Mammary epithelial cell (primary cell): ENCODE measurements at regions of chr7 and their contacts with region 1.

Region 1: DNA sequence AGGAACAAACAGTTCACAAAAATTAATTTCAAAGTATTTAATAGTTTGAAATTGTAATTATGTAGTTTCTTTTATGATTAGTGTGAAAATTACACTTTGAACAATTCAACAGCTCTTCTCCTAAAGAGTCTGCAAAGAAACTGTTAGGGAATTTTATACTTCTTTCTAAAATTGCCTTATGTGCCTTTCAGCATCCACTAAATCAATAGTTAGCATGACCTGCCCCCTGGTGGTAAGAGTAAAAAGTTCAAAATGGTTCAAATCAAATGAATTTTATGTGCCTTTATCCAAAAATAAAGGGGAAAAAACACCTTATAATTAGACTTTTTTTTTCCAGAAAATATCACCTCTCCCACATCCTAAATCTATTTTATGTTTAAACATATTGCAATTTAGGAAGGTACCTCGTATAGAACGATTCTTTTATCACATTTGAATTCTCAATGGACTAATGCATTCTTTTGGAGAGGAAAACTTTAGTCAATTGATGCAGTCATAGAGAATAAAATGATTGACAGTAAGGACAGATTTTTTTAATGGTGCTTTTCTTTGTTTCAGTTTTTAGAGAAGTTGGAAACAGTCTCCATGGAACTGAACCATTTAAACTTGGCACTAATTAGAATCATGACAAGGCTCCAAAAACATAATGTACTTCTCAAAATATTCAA is 163.7 kb downstream of the SEMA3D start:
- DNase-seq: peak; percentile 24
- H3K4me3 ChIP-seq: no peak overlapping the region
- H3K27ac ChIP-seq: no peak overlapping the region
- H3K4me1 ChIP-seq: no peaks in the 10 kb centered on the region
- H3K27me3 ChIP-seq: no peaks in the 10 kb centered on the region
- CTCF ChIP-seq: peak; percentile 49 to 58

Region 2: DNA sequence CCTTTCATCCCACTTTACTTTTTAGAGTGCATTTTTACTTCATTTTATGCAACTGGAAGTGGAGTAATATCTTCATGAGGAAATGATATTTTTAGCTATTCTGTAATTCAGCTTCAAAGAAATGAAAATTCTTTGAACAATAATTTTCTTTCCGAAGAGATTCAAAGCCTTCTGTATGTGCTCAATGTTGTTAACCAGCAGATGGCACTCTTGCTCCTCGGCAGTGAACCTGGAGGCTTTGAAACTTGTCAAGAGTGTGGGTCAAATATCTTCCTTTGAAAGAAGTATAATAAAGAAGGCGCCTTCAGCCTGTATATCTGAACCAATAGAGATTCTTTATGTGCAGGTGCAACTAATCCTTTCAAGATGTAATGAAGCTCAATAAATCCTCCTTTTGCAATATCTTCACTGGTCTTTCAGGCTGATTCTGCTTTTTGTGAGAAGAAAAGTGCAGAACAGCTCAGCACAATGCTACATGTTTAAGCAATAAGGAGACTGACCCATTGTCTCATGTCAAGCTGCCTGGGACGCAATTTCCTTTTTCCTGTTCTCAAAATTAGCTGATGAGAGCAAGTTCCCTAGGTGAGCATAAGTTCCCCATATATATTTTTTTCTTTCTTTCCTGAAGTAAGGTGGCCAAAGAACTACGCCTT is 1087.0 kb before region 1 on chr7:
- CTCF ChIA-PET with region 1: no interaction called
- dilution Hi-C with region 1: no loop called
- in situ Hi-C with region 1: loop called in 1 of 2 experiments (anchors 10 kb)
- intact Hi-C with region 1: loop called (anchors 1 kb)
- DNase-seq: peak; percentile 57
- H3K4me3 ChIP-seq: no peak overlapping the region
- H3K27ac ChIP-seq: no peak overlapping the region
- H3K4me1 ChIP-seq: no peaks in the 10 kb centered on the region
- H3K27me3 ChIP-seq: no peaks in the 10 kb centered on the region
- CTCF ChIP-seq: peak; percentile 90 to 96

Region 3: DNA sequence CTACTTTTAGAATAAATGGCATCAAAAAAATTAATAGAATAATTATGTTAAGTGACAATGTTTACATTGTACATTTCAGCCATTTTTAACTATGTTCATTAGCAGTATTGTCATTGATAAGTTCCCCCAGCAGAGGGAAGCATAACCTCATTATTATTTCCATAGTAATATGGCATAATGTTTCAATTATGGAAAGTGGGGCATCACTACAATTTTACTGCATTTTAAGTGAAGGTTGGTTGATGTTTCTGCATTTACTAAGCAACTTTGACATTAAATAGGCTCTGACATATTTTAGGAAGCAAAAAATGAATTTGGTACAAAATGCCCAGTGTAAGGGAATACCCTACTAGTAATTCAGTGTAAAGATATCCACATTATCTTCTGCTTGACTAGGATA is 1046.9 kb before region 1 on chr7:
- CTCF ChIA-PET with region 1: no interaction called
- dilution Hi-C with region 1: no loop called
- in situ Hi-C with region 1: loop called (anchors 5 to 10 kb)
- intact Hi-C with region 1: loop called (anchors 1 kb)
- DNase-seq: peak; percentile 17
- H3K4me3 ChIP-seq: no peak overlapping the region
- H3K27ac ChIP-seq: no peak overlapping the region
- H3K4me1 ChIP-seq: no peaks in the 10 kb centered on the region
- H3K27me3 ChIP-seq: no peaks in the 10 kb centered on the region
- CTCF ChIP-seq: peak; percentile 59

Region 4: GRCh38 chr7:84194543-84195271 is 828.5 kb before region 1 on chr7 and contains the start of gene SEMA3A:
- CTCF ChIA-PET with region 1: no interaction called
- dilution Hi-C with region 1: no loop called
- in situ Hi-C with region 1: loop called (anchors 25 kb)
- intact Hi-C with region 1: no loop called
- DNase-seq: peak; percentile 93
- H3K4me3 ChIP-seq: peak within 1 kb of the TSS; percentile 45 to 84 (median 72)
- H3K27ac ChIP-seq: peak within 1 kb of the TSS; percentile 90
- H3K4me1 ChIP-seq: peaks cover 12% of the 10 kb centered on the region
- H3K27me3 ChIP-seq: no peaks in the 10 kb centered on the region
- CTCF ChIP-seq: no peak
- total RNA-seq, gene SEMA3A: 0.83 to 12.8 TPM

Region 5: GRCh38 chr7:84455788-84456187 is 567.4 kb before region 1 on chr7:
- CTCF ChIA-PET with region 1: no interaction called
- dilution Hi-C with region 1: no loop called
- in situ Hi-C with region 1: loop called in 1 of 2 experiments (anchors 25 kb)
- intact Hi-C with region 1: loop called (anchors 5 kb)
- DNase-seq: peak; percentile 1
- H3K4me3 ChIP-seq: no peak overlapping the region
- H3K27ac ChIP-seq: no peak overlapping the region
- H3K4me1 ChIP-seq: no peaks in the 10 kb centered on the region
- H3K27me3 ChIP-seq: no peaks in the 10 kb centered on the region
- CTCF ChIP-seq: no peak

Region 6: DNA sequence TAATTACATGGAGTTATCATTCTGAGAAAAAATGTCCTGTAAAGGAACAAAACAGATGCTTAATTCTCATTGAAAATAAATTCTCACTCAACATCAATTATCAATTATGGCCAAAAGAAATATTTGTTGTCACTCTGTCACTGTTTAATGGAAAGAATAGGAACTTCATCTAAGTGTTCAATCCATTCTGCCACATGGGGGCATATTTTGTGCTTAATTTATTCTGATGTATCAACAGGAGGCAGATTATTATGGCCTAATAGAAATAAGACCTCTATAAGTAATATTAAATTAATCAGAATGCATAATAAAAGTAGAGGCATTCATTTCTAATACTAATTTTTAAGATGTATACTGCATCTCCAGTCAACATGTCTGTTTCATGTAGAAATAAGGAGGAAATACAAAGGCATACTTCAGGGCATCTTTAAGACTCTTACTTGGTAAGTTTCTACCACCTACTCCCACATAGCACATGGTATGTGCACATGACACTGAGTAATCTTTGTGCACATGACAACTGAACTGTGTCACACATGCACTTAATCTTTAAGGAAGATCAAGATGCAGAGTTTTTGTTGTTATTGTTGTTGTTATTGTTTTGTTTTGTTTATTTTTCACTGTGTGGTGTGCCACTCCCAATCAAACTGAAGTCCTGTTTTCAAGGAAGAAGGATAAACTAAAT is 408.2 kb before region 1 on chr7:
- CTCF ChIA-PET with region 1: no interaction called
- dilution Hi-C with region 1: no loop called
- in situ Hi-C with region 1: loop called (anchors 25 kb)
- intact Hi-C with region 1: loop called (anchors 5 kb)
- DNase-seq: peak; percentile 11
- H3K4me3 ChIP-seq: no peak overlapping the region
- H3K27ac ChIP-seq: no peak overlapping the region
- H3K4me1 ChIP-seq: no peaks in the 10 kb centered on the region
- H3K27me3 ChIP-seq: no peaks in the 10 kb centered on the region
- CTCF ChIP-seq: peak; percentile 21 to 46

Region 7: GRCh38 chr7:84746353-84746752 is 276.8 kb before region 1 on chr7:
- CTCF ChIA-PET with region 1: no interaction called
- dilution Hi-C with region 1: no loop called
- in situ Hi-C with region 1: no loop called
- intact Hi-C with region 1: no loop called
- DNase-seq: no peak
- H3K4me3 ChIP-seq: no peak overlapping the region
- H3K27ac ChIP-seq: no peak overlapping the region
- H3K4me1 ChIP-seq: no peaks in the 10 kb centered on the region
- H3K27me3 ChIP-seq: no peaks in the 10 kb centered on the region
- CTCF ChIP-seq: no peak

Region 8: DNA sequence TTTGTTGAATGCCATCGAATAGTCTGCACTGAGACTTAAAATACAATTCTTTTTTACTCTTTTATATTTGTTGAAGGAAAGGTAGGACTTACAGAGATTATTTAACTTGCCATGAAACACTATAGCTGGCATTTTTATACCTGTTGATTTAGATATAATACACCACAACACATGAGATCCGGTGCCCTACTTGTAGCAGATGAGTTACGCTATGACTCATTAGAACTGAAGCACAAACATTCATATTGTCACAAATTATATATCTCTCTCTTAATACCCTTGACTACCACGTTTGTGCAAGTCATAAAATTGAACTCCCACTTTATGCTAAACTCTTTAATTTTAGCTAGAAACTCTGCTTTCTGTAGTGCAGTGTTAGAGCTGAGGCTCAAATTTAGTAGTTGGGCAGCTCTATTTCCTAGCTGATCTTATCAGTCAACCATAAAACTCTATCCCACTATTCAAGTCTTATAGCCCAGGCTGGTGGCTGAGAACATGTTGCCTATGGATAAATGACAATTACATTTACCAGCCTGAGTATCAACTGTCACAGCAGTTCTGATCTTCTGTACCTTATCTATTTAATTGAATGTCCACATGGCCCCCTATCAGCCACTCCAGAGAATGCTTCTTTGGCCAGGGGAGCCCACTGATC is 301.1 kb after region 1 on chr7:
- CTCF ChIA-PET with region 1: no interaction called
- dilution Hi-C with region 1: no loop called
- in situ Hi-C with region 1: no loop called
- intact Hi-C with region 1: no loop called
- DNase-seq: no peak
- H3K4me3 ChIP-seq: no peak overlapping the region
- H3K27ac ChIP-seq: no peak overlapping the region
- H3K4me1 ChIP-seq: no peaks in the 10 kb centered on the region
- H3K27me3 ChIP-seq: no peaks in the 10 kb centered on the region
- CTCF ChIP-seq: no peak